HepG2 (cell line): ENCODE measurements at regions of chr7 and their contacts with region 1.

Region 1: GRCh38 chr7:17142831-17143541 is 155.5 kb upstream of the AHR start:
- DNase-seq: peak; percentile 92
- ATAC-seq: peak; percentile 97
- H3K4me3 ChIP-seq: peak overlapping the region in 2 of 3 experiments; percentile 38 to 42; a peak in 3 of 6 replicates
- H3K27ac ChIP-seq: peak overlapping the region; percentile 80
- H3K4me1 ChIP-seq: peaks cover 66% of the 10 kb centered on the region
- H3K27me3 ChIP-seq: no peaks in the 10 kb centered on the region
- CTCF ChIP-seq: no peak
- EP300 ChIP-seq: peak in 1 of 2 experiments; percentile 84; a peak in 2 of 4 replicates
- POLR2A ChIP-seq: no peak
- RAD21 ChIP-seq: no peak

Region 2: GRCh38 chr7:16989811-16990413 is 153.1 kb before region 1 on chr7:
- CTCF ChIA-PET with region 1: no interaction called
- POLR2A ChIA-PET with region 1: interaction called, 7 read pairs
- in situ Hi-C with region 1: no loop called
- intact Hi-C with region 1: loop called (anchors 1 kb)
- DNase-seq: peak; percentile 100
- ATAC-seq: peak; percentile 96
- H3K4me3 ChIP-seq: peak overlapping the region; percentile 15 to 51 (median 36); a peak in 5 of 6 replicates
- H3K27ac ChIP-seq: peak overlapping the region; percentile 76
- H3K4me1 ChIP-seq: peaks cover 81% of the 10 kb centered on the region
- H3K27me3 ChIP-seq: no peaks in the 10 kb centered on the region
- CTCF ChIP-seq: no peak
- EP300 ChIP-seq: peak; percentile 49 to 98; a peak in 2 of 4 replicates
- POLR2A ChIP-seq: peak in 1 of 2 experiments; percentile 41; a peak in 1 of 4 replicates
- RAD21 ChIP-seq: no peak; the same call in none of the 2 replicates

Region 3: GRCh38 chr7:17109017-17109416 is 34.0 kb before region 1 on chr7:
- CTCF ChIA-PET with region 1: no interaction called
- POLR2A ChIA-PET with region 1: no interaction called
- in situ Hi-C with region 1: no loop called
- intact Hi-C with region 1: no loop called
- DNase-seq: no peak
- ATAC-seq: no peak
- H3K4me3 ChIP-seq: no peak overlapping the region
- H3K27ac ChIP-seq: no peak overlapping the region
- H3K4me1 ChIP-seq: no peaks in the 10 kb centered on the region
- H3K27me3 ChIP-seq: no peaks in the 10 kb centered on the region
- CTCF ChIP-seq: no peak
- EP300 ChIP-seq: no peak
- POLR2A ChIP-seq: no peak
- RAD21 ChIP-seq: no peak

Region 4: GRCh38 chr7:17185690-17186070 is 42.7 kb after region 1 on chr7:
- CTCF ChIA-PET with region 1: no interaction called
- POLR2A ChIA-PET with region 1: interaction called, 4 read pairs
- in situ Hi-C with region 1: no loop called
- intact Hi-C with region 1: loop called (anchors 2 kb)
- DNase-seq: no peak
- ATAC-seq: no peak
- H3K4me3 ChIP-seq: no peak overlapping the region
- H3K27ac ChIP-seq: peak overlapping the region; percentile 83
- H3K4me1 ChIP-seq: peaks cover 43% of the 10 kb centered on the region
- H3K27me3 ChIP-seq: no peaks in the 10 kb centered on the region
- CTCF ChIP-seq: no peak
- EP300 ChIP-seq: no peak
- POLR2A ChIP-seq: no peak
- RAD21 ChIP-seq: no peak

Region 5: GRCh38 chr7:17239683-17240521 is 96.9 kb after region 1 on chr7:
- CTCF ChIA-PET with region 1: no interaction called
- POLR2A ChIA-PET with region 1: no interaction called
- in situ Hi-C with region 1: no loop called
- intact Hi-C with region 1: loop called (anchors 2 kb)
- DNase-seq: peak; percentile 91
- ATAC-seq: peak; percentile 95
- H3K4me3 ChIP-seq: no peak overlapping the region
- H3K27ac ChIP-seq: no peak overlapping the region
- H3K4me1 ChIP-seq: peaks cover 18% of the 10 kb centered on the region
- H3K27me3 ChIP-seq: peaks cover 0 to 8% of the 10 kb centered on the region in 2 experiments; a peak in 3 of 5 replicates
- CTCF ChIP-seq: no peak
- EP300 ChIP-seq: peak in 1 of 2 experiments; percentile 89; a peak in 2 of 4 replicates
- POLR2A ChIP-seq: no peak
- RAD21 ChIP-seq: no peak

Region 6: DNA sequence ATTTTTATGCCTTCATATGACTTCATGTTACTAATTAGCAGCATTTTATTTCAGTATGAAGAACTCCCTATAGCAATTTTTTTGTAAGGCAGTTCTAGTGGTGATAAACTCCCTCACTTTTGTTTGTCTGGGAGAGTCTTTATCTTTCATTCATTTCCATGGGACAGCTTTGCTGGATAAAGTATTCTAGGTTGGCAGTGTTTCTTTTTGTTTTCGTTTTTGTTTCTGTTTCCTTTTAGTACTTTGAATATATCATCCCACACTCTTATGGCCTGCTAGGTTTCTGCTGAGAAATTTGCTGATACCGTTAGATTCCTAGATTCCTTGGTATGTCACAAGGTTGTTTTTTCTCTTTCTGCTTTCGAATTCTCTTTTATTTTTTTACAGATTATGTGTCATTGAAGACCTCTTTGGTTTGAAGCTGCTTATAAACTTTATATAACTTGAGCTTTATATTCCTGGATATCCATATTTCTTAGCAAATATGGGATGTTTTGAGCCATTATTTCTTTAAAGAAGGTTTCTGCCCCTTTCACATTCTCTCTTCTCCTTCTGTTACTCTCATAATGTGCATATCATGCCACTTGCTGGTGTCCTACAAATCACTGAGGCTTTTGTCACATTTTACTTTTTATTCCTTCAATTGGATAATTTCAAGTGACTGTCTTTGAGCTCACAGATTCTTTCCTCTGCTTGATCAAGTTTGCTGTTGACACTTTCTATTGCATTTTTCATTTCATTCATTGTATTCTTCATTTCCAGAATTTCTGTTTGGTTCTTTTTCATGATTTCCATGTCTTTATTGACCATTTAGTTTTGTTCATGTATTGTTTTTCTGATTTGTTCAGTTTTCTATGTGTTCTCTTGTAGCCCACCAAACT is 126.6 kb after region 1 on chr7:
- CTCF ChIA-PET with region 1: no interaction called
- POLR2A ChIA-PET with region 1: no interaction called
- in situ Hi-C with region 1: no loop called
- intact Hi-C with region 1: no loop called
- DNase-seq: no peak
- ATAC-seq: no peak
- H3K4me3 ChIP-seq: no peak overlapping the region
- H3K27ac ChIP-seq: no peak overlapping the region
- H3K4me1 ChIP-seq: no peaks in the 10 kb centered on the region
- H3K27me3 ChIP-seq: no peaks in the 10 kb centered on the region
- CTCF ChIP-seq: no peak
- EP300 ChIP-seq: no peak
- POLR2A ChIP-seq: no peak
- RAD21 ChIP-seq: no peak

Region 7: DNA sequence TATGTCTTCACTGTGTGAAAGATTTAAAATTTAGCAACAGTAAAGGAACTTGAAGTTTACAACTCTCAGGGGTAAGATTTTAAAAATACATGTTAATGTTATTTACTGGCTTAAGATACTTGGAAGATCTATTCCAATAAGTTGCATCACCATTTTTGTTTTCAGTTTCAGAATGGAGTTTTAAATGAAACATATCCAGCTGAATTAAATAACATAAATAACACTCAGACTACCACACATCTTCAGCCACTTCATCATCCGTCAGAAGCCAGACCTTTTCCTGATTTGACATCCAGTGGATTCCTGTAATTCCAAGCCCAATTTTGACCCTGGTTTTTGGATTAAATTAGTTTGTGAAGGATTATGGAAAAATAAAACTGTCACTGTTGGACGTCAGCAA is 199.8 kb after region 1 on chr7:
- CTCF ChIA-PET with region 1: no interaction called
- POLR2A ChIA-PET with region 1: no interaction called
- in situ Hi-C with region 1: no loop called
- intact Hi-C with region 1: no loop called
- DNase-seq: no peak
- ATAC-seq: no peak
- H3K4me3 ChIP-seq: no peak overlapping the region
- H3K27ac ChIP-seq: no peak overlapping the region
- H3K4me1 ChIP-seq: no peaks in the 10 kb centered on the region
- H3K27me3 ChIP-seq: no peaks in the 10 kb centered on the region
- CTCF ChIP-seq: no peak
- EP300 ChIP-seq: no peak
- POLR2A ChIP-seq: no peak
- RAD21 ChIP-seq: no peak

Region 8: GRCh38 chr7:17523813-17524741 is 381.1 kb after region 1 on chr7:
- CTCF ChIA-PET with region 1: no interaction called
- POLR2A ChIA-PET with region 1: no interaction called
- in situ Hi-C with region 1: no loop called
- intact Hi-C with region 1: no loop called
- DNase-seq: peak; percentile 44
- ATAC-seq: peak; percentile 97
- H3K4me3 ChIP-seq: no peak overlapping the region
- H3K27ac ChIP-seq: peak overlapping the region; percentile 22
- H3K4me1 ChIP-seq: peaks cover 22% of the 10 kb centered on the region
- H3K27me3 ChIP-seq: no peaks in the 10 kb centered on the region
- CTCF ChIP-seq: no peak
- EP300 ChIP-seq: peak; percentile 20 to 57; a peak in 3 of 4 replicates
- POLR2A ChIP-seq: no peak
- RAD21 ChIP-seq: no peak